Activated CD4-positive, alpha-beta memory T cell treated with anti-CD3 and anti-CD28 coated beads, Interleukin-2, amount 10 ng/mL, durations not matched to agents 7 days and 5 days (primary cell): ENCODE measurements at regions of chr15 and their contacts with region 1.

Region 1: GRCh38 chr15:43903864-43904290 is 77.1 kb downstream of the WDR76 start:
- DNase-seq: peak; percentile 50
- H3K4me3 Mint-ChIP-seq: no peak overlapping the region
- H3K27ac Mint-ChIP-seq: no peak overlapping the region
- H3K4me1 Mint-ChIP-seq: peaks cover 2% of the 10 kb centered on the region
- H3K27me3 Mint-ChIP-seq: no peaks in the 10 kb centered on the region

Region 2: DNA sequence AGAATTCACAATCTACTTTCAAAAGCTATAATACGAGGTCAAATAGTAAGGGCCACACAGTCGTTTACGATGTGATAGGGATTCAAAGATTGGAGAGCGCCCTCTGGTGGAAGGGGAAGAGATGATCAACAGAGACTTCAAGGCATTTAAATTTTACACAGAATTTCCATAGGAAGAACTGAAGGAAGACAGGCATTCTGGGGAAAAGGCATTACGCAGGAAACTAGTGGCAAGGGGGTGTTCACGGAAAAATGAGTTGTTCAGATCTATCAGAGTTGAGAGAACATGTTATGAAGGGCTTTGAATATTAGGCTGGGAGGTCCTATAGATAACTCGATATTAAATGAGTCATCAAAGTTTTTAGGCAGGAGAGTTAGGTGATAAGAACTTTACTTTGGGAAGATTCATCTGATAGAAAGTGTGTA is 162.5 kb after region 1 on chr15:
- CTCF ChIA-PET with region 1: interaction called, 31 read pairs
- POLR2A ChIA-PET with region 1: no interaction called
- DNase-seq: peak; percentile 62
- H3K4me3 Mint-ChIP-seq: no peak overlapping the region
- H3K27ac Mint-ChIP-seq: no peak overlapping the region
- H3K4me1 Mint-ChIP-seq: peaks cover 5% of the 10 kb centered on the region
- H3K27me3 Mint-ChIP-seq: peaks cover 28% of the 10 kb centered on the region

Region 3: GRCh38 chr15:44219073-44219472 is 315.2 kb after region 1 on chr15:
- CTCF ChIA-PET with region 1: interaction called, 12 read pairs
- POLR2A ChIA-PET with region 1: no interaction called
- DNase-seq: no peak
- H3K4me3 Mint-ChIP-seq: no peak overlapping the region
- H3K27ac Mint-ChIP-seq: no peak overlapping the region
- H3K4me1 Mint-ChIP-seq: peaks cover under 1% of the 10 kb centered on the region
- H3K27me3 Mint-ChIP-seq: peaks cover 21% of the 10 kb centered on the region